Activated CD4-positive, alpha-beta T cell treated with anti-CD3 and anti-CD28 coated beads, Interleukin-2, amount 10 ng/mL, durations not matched to agents 24 days and 14 days (primary cell): ENCODE measurements at regions of chr1 and their contacts with region 1.

Region 1: DNA sequence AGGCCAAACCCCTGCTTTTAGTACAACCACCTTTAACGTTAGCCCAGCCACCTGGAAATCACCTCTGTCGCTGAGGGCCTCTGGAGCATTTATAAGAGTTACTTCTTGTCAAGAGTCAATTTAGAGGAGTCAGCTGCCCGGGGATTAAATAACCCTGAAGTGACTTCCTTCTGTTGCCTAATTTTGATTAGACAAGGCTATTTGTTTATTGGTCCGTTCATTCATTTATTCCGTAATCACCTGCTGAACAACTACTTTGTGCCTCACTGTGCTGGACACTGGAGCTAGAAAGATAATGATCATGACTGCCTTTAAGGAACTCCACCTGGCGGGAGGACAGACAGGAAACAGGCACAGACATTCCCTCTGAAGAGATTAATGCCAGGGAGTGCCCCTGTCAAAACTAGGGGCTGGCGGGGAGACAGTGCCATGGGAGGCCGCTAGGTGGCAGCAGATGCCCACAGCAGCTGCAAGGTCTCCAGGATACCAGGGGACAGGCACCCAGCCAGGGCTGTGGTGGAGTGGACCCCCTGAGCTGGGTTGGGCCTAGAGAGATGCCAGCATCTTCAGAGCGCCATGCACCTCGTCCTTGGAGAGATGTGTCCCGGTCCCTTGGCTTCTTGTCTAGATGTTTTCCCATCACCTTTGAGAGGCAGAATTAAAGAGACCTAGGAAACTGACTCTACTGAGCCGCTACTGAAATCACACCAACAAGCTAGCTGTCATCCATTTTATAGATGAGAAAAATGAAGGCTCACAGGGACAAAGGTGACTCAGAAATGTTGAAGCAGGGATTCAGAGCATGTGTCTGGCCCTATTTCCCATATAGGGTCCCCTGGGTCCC is 3.7 kb downstream of the REN start:
- DNase-seq: peak; percentile 93
- H3K4me3 Mint-ChIP-seq: no peak overlapping the region
- H3K27ac Mint-ChIP-seq: no peak overlapping the region
- H3K4me1 Mint-ChIP-seq: no peaks in the 10 kb centered on the region
- H3K27me3 Mint-ChIP-seq: peaks cover 6% of the 10 kb centered on the region

Region 2: GRCh38 chr1:204207136-204207616 is 44.7 kb after region 1 on chr1:
- intact Hi-C with region 1: loop called (anchors 1 kb)
- DNase-seq: peak; percentile 92
- H3K4me3 Mint-ChIP-seq: no peak overlapping the region
- H3K27ac Mint-ChIP-seq: no peak overlapping the region
- H3K4me1 Mint-ChIP-seq: no peaks in the 10 kb centered on the region
- H3K27me3 Mint-ChIP-seq: peaks cover 33% of the 10 kb centered on the region

Region 3: GRCh38 chr1:204368996-204369726 is 206.7 kb after region 1 on chr1:
- intact Hi-C with region 1: no loop called
- DNase-seq: no peak
- H3K4me3 Mint-ChIP-seq: no peak overlapping the region
- H3K27ac Mint-ChIP-seq: no peak overlapping the region
- H3K4me1 Mint-ChIP-seq: peaks cover 23% of the 10 kb centered on the region
- H3K27me3 Mint-ChIP-seq: peaks cover 10% of the 10 kb centered on the region

Region 4: DNA sequence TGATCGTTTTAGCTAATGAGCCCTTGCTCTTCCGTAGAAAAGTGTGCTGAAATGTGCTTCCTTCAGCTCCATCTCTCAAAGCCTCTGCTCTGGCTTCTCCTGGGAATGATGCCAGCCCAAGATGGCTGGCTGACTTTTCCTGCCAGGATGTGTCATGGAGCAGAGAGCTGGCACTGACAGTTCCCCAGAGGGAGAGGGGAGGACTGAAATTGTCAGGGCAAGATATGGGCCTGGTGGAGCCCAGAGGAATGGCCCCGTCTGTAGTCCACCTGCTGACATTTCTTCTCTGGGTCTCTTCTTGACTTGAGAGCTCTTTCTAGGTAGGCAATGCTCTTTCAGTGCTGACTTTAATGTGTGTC is 222.5 kb after region 1 on chr1:
- intact Hi-C with region 1: loop called (anchors 5 kb)
- DNase-seq: no peak
- H3K4me3 Mint-ChIP-seq: no peak overlapping the region
- H3K27ac Mint-ChIP-seq: no peak overlapping the region
- H3K4me1 Mint-ChIP-seq: peaks cover 2% of the 10 kb centered on the region
- H3K27me3 Mint-ChIP-seq: peaks cover 12% of the 10 kb centered on the region

Region 5: DNA sequence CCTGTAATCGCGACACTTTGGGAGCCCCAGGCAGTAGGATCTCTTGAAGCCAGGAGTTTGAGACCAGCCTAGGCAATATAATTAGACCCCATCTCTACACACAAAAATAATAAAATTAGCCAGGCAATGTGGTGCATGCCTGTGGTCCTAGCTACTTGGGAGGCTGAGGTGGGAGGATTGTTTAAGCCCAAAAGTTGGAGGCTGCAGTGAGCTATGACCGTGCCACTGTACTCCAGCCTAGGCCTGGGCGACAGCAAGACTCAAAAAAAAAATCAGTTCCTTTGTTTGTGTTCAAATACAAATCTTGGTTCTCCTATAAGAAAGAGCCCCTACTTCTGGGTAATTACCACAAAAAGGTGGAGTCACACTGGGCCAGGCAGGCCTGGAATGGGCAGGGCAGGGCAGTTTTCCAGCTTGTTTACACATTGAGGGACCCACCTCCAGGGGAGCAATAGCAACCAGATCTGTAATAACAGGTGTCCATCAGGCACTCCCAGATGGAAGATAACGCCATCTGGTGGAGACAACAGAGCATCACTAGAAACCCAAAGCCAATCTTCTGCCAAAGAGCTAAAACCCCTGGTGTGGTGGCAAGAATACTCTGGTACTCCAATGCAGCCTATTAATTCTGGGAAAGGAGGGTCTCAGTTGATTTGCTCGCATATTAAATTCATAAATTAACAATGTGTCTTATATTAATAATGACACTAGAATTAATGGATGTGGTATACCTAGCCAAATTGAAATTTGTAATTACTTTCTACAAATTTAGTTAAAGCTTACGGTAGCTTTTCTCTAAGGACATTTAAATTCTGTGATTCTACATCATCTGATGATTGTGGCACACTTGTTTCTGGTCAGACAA is 236.0 kb after region 1 on chr1:
- intact Hi-C with region 1: loop called (anchors 1 kb)
- DNase-seq: peak; percentile 88
- H3K4me3 Mint-ChIP-seq: no peak overlapping the region
- H3K27ac Mint-ChIP-seq: peak overlapping the region; percentile 66
- H3K4me1 Mint-ChIP-seq: peaks cover 2% of the 10 kb centered on the region
- H3K27me3 Mint-ChIP-seq: no peaks in the 10 kb centered on the region

Region 6: GRCh38 chr1:204494281-204495077 is 332.0 kb after region 1 on chr1 and contains the start of gene PIK3C2B:
- intact Hi-C with region 1: loop called (anchors 2 kb)
- DNase-seq: peak; percentile 92
- H3K4me3 Mint-ChIP-seq: peak within 1 kb of the TSS; percentile 98
- H3K27ac Mint-ChIP-seq: peak within 1 kb of the TSS; percentile 96
- H3K4me1 Mint-ChIP-seq: peaks cover 45% of the 10 kb centered on the region
- H3K27me3 Mint-ChIP-seq: peaks cover 2% of the 10 kb centered on the region
- total RNA-seq, gene PIK3C2B: 22.7 and 23.6 TPM in 2 replicates